ENCODE measurements at regions of chr15 and their contacts with region 1.

Region 1: DNA sequence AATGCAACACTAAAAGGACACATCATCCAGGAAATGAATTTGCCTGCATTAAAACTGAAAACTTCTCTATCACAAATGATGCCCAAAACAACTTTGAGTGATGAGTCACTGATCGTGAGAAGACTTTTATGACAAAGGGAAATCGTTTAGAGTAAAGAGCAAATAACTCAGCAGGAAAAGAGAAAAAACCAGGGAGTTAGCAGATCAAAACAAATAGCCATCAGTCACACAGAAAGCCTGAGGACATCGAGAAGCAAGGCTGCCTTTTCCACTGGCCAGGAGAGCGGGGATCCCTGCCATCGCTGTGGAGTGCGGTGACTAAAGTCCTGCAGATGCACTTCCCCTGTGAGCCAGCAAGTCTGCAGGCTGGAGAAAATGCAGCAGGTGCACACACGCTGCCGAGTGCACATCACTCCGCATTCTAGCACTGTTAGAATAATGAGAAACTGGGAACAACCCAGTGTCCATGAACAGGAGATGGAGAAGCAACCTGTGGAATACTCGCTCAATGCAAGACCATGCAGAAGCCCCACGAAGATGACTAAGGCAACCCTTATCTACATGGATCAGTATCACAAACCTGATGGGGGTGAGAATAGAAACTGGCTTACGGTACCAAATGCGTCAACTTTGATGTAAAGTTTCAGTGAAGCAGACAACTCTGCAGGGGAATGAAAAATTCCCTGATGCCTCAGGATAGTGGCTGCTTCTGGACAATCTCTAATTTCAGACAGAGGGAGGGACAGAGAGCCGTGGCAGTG is 86.4 kb downstream of the NSMCE3 start:
- DNase-seq: no peak
- ATAC-seq: 0 out of 2 replicates have a peak, but pooled peaks have one; percentile 26
- H3K4me3 ChIP-seq: no peak overlapping the region
- H3K27ac ChIP-seq: no peak overlapping the region
- H3K4me1 ChIP-seq: no peaks in the 10 kb centered on the region
- H3K27me3 ChIP-seq: no peaks in the 10 kb centered on the region
- CTCF ChIP-seq: no peak

Region 2: GRCh38 chr15:28921919-28922706 is 261.1 kb before region 1 on chr15:
- CTCF ChIA-PET with region 1: no interaction called
- POLR2A ChIA-PET with region 1: no interaction called
- in situ Hi-C with region 1: no loop called
- intact Hi-C with region 1: no loop called
- DNase-seq: no peak
- ATAC-seq: peak; percentile 64; the same call in 1 of the 2 replicates
- H3K4me3 ChIP-seq: no peak overlapping the region
- H3K27ac ChIP-seq: no peak overlapping the region
- H3K4me1 ChIP-seq: no peaks in the 10 kb centered on the region
- H3K27me3 ChIP-seq: peaks cover 6% of the 10 kb centered on the region; the same call in 1 of the 2 replicates
- CTCF ChIP-seq: no peak; the same call in none of the 2 replicates

Region 3: DNA sequence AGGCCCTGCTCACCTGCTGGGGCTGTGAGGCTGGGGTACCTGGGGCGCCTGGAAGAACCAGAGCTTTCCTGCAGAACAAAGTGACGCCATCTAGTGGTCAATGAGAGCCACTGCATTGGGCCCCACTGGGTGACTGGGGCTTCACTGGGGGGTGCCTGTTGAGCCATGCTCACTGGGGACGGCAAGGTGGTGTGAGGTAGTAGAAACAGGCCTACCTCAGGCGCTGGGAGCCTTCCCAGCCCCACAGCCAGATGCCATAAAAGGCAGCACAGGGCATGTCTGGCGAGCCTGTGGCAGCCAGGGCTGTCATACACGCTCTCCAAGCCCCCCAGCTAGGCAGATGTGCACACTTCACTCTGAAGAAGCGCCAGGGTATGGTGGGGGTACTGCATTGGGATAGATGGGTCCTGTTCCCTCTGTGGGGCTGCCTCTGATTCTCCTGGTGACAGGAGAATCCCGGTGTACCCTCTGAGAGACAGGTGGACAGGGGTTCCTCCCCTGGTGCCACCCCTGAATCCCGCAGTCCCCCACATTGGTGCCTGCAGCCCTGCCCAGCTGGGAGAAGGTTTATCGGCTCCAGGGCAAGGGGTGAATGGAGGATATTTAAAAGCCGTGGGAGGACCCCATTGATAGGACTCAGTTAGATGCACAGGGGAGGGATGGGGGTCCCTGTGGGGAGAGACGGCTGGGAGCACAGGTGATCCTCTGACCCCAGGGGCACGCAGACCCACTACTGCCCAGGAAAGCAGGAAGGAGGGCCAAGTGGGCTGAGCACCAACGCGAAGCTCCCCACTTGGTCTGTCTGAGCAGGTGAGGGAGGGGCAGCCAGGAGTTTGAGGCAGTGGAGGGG is 92.4 kb before region 1 on chr15:
- CTCF ChIA-PET with region 1: no interaction called
- POLR2A ChIA-PET with region 1: no interaction called
- in situ Hi-C with region 1: no loop called
- intact Hi-C with region 1: no loop called
- DNase-seq: no peak
- ATAC-seq: 0 out of 2 replicates have a peak, but pooled peaks have one; percentile 22
- H3K4me3 ChIP-seq: no peak overlapping the region
- H3K27ac ChIP-seq: no peak overlapping the region
- H3K4me1 ChIP-seq: no peaks in the 10 kb centered on the region
- H3K27me3 ChIP-seq: no peaks in the 10 kb centered on the region; the same call in 1 of the 2 replicates
- CTCF ChIP-seq: peak; percentile 92

Region 4: GRCh38 chr15:29139540-29140459 is 43.5 kb before region 1 on chr15:
- CTCF ChIA-PET with region 1: no interaction called
- POLR2A ChIA-PET with region 1: no interaction called
- in situ Hi-C with region 1: no loop called
- intact Hi-C with region 1: loop called (anchors 5 kb)
- DNase-seq: no peak
- ATAC-seq: peak; percentile 93
- H3K4me3 ChIP-seq: peak overlapping the region in 1 of 2 experiments; percentile 20; a peak in 1 of 4 replicates
- H3K27ac ChIP-seq: no peak overlapping the region
- H3K4me1 ChIP-seq: peaks cover 4% of the 10 kb centered on the region; the same call in 1 of the 2 replicates
- H3K27me3 ChIP-seq: no peaks in the 10 kb centered on the region; the same call in 1 of the 2 replicates
- CTCF ChIP-seq: peak; percentile 96

Region 5: DNA sequence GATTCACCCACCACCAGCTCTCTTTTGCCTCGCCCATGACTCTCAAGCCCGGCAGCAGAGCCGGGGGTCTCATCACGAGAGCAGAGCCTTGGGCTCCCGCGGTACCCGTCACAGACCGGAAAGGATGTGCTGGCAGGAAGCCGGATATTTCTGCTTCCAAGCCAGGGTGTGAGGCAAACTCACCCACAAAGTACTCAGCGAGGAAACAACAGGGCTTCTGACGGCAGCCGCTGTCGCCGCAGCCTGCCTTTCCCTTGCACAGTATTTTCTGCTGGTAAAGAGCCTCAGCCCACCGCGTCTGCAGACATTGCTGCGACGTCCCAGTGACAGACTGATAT is 33.5 kb before region 1 on chr15:
- CTCF ChIA-PET with region 1: no interaction called
- POLR2A ChIA-PET with region 1: no interaction called
- in situ Hi-C with region 1: no loop called
- intact Hi-C with region 1: loop called (anchors 5 kb)
- DNase-seq: no peak
- ATAC-seq: no peak
- H3K4me3 ChIP-seq: no peak overlapping the region
- H3K27ac ChIP-seq: no peak overlapping the region
- H3K4me1 ChIP-seq: no peaks in the 10 kb centered on the region
- H3K27me3 ChIP-seq: no peaks in the 10 kb centered on the region
- CTCF ChIP-seq: no peak

Region 6: GRCh38 chr15:29244544-29244943 is 61.3 kb after region 1 on chr15:
- CTCF ChIA-PET with region 1: no interaction called
- POLR2A ChIA-PET with region 1: no interaction called
- in situ Hi-C with region 1: no loop called
- intact Hi-C with region 1: loop called (anchors 2 kb)
- DNase-seq: no peak
- ATAC-seq: no peak
- H3K4me3 ChIP-seq: no peak overlapping the region
- H3K27ac ChIP-seq: no peak overlapping the region
- H3K4me1 ChIP-seq: no peaks in the 10 kb centered on the region
- H3K27me3 ChIP-seq: no peaks in the 10 kb centered on the region
- CTCF ChIP-seq: no peak

Region 7: DNA sequence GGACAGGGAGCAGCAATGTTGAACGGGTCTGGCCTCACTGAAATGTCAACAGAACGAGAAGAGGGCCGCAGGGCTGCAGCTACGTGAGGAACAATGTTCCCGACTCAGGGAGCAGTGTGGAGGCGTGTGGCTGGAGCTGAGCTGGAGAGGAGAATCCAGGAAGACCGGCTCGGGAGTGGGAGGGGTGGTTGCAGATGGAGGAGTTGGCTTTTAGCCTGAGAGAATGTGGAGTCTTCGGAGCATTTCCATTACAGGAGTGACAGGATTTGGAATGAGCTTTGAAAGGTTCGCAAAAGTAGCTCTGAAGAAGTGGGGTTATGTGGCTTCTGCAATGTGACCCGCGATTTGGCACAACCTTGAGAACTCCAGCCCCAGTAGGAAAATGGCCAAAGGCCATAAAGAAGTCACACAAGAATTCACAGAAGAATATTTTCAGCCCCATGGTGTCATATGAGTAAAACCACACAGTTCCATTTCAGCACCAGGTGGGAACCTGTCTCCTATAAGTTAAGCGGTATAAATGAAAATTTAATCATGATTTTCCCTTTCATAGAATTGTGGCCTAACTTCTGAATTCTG is 165.2 kb after region 1 on chr15:
- CTCF ChIA-PET with region 1: no interaction called
- POLR2A ChIA-PET with region 1: no interaction called
- in situ Hi-C with region 1: no loop called
- intact Hi-C with region 1: no loop called
- DNase-seq: no peak
- ATAC-seq: no peak
- H3K4me3 ChIP-seq: no peak overlapping the region
- H3K27ac ChIP-seq: no peak overlapping the region
- H3K4me1 ChIP-seq: no peaks in the 10 kb centered on the region
- H3K27me3 ChIP-seq: no peaks in the 10 kb centered on the region
- CTCF ChIP-seq: no peak

Region 8: GRCh38 chr15:29638781-29639180 is 455.5 kb after region 1 on chr15:
- CTCF ChIA-PET with region 1: no interaction called
- POLR2A ChIA-PET with region 1: no interaction called
- in situ Hi-C with region 1: no loop called
- intact Hi-C with region 1: no loop called
- DNase-seq: no peak
- ATAC-seq: no peak
- H3K4me3 ChIP-seq: no peak overlapping the region
- H3K27ac ChIP-seq: no peak overlapping the region
- H3K4me1 ChIP-seq: no peaks in the 10 kb centered on the region
- H3K27me3 ChIP-seq: no peaks in the 10 kb centered on the region
- CTCF ChIP-seq: no peak